PC-3 (cell line): ENCODE measurements at regions of chr2 and their contacts with region 1.

Region 1: DNA sequence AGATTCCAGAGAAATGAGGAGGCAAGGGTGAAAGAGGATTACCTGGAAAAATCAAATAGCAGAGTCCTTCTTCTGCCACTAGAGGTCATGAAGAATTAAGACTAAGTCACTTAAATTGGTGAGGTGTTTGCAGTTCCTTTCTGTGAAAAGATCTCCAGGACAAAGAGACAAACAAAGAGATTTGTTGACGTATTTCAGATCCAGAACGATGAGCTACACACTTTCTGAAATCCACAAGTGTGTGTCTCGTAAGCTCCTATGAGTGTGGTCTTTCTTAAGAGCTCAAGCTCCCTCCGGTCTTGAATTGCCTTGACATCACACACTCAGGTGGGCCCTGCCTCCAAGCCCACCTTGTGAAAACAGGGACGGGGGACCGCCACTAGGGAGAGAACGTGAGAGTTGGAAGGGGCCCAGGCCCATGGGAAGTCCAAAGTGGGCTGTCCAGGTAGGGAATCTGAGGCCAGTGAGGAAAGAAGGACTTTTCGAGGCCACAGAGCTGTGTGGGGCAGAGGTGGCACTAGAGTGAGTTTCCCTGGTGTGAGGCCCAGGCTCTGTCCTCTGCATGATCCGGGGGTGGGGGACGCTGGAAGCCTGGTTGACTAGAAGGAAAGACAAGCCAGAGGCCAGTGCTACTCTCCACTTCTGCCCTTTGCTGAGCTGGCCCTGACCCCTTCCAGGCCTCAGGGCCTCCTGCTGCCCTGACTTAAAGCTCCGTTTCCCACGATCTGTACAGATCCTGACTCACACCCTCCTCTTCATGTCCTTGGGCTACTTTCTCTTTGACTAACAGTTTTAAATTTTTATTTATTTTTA is 168.1 kb upstream of the NCK2 start:
- DNase-seq: peak; percentile 80
- ATAC-seq: peak; percentile 86
- H3K4me3 ChIP-seq: peak overlapping the region; percentile 36; the same call in 1 of the 2 replicates
- H3K27ac ChIP-seq: peak overlapping the region; percentile 93
- H3K4me1 ChIP-seq: peaks cover 30% of the 10 kb centered on the region
- H3K27me3 ChIP-seq: no peaks in the 10 kb centered on the region
- CTCF ChIP-seq: peak; percentile 80

Region 2: DNA sequence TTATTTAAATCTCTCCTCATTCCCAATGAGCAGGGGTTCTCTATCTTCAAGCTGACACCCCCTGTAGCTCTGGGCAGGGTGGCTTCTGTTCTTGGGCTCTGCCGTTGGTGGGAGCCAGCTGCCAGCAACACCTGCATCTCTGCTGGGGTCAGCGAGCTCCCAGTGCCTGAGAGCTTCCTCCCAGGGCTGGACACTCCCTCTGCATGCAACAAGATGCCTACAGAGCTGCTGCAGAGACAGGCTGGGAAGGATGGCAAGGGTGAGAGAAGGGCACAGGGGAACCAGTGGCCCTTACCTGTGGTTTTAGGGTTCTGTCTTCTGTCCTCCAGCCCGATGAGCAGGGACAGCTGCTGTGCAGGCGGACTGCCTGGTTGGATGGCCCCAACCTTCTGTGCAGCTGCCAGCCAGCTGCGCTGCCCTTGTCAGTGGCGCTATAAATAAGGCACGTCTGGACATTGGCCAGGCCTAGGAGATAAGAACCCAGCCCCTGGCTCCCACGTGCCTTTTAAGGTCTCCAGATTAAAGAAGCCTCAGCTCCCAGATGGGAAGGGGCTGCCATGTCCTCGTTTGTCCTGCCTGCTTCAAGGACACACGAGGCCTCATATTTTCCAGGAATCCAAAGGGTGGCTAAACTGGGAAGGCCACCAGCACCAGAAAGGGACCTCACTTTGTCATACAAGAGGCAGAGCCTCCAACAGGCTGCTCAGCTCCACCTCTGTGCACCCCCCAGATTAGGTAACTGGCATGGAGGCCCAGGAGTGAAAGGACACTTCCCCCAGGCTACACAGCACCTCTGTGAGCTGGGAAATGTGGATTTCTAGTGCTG is 138.3 kb before region 1 on chr2:
- CTCF ChIA-PET with region 1: no interaction called
- POLR2A ChIA-PET with region 1: no interaction called
- intact Hi-C with region 1: no loop called
- DNase-seq: no peak
- ATAC-seq: no peak
- H3K4me3 ChIP-seq: no peak overlapping the region
- H3K27ac ChIP-seq: no peak overlapping the region
- H3K4me1 ChIP-seq: no peaks in the 10 kb centered on the region
- H3K27me3 ChIP-seq: no peaks in the 10 kb centered on the region
- CTCF ChIP-seq: no peak

Region 3: DNA sequence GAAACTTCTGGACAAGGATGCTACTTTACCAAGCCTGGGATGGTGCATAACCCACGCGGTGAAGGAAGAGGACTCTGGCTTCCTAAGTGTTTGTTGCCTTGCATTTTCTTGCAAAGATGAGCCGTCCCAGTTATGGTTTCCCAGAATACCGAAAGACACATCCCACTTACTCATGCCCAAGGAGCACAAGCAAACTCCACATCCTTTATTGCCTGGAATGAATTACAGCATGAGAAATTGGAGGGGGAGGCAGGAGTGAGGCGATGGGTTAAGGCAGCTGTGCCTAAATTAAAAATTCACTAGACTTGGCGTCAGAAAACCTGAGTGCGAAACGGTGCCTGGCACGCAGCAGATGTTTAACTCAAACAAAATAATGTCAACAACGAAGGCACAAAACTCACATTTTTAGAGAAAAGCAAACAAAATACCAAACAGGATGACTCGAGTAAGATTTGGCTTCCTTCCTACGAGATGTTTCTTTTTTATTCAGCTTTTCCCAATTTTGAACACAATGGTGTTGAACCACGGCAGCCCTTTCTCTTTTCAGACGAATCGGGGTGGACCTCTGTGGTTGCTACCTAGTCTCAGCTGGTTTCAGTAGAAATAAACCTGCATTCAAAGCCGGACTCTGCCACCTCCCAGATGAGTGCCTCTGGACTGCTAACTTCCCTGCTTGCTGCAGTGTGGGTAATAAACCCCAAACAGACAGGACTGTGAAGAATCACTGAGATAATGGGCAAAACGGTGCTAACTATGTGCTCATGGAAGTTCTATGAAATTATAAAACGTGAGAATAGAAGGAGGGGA is 67.7 kb after region 1 on chr2:
- CTCF ChIA-PET with region 1: no interaction called
- POLR2A ChIA-PET with region 1: interaction called, 6 read pairs
- intact Hi-C with region 1: loop called (anchors 2 kb)
- DNase-seq: peak; percentile 55
- ATAC-seq: peak; percentile 78
- H3K4me3 ChIP-seq: peak overlapping the region; percentile 59
- H3K27ac ChIP-seq: peak overlapping the region; percentile 27
- H3K4me1 ChIP-seq: peaks cover 35% of the 10 kb centered on the region
- H3K27me3 ChIP-seq: no peaks in the 10 kb centered on the region
- CTCF ChIP-seq: no peak

Region 4: DNA sequence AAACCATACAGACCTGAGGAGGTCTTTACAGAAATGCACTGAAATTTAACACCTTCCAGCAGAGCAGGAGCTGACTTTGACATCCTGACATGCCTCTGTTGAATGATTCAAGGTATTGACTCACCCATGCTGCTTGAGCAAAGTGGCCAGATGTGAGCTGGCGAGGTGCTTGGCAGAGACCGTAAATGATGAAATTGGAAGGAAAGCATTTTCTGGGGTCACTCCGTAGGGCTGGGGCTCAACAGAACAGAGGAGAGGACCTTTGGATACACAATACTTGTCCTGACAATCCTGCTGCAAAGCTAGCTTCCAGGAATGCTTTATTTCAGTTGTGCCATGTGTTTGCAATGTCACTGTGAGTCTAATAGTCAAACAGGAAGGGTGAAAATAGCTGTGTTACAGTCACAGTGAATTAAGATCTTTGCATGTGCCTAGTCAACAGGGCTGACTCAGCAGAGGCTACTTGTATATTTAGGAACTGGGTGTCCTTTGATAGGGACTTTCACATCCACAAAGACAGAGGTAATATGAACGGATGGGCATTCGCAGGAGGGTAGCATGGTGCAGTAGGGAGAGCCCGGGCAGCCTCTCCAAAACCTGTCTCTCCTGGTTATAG is 136.4 kb after region 1 on chr2:
- CTCF ChIA-PET with region 1: interaction called, 6 read pairs
- POLR2A ChIA-PET with region 1: no interaction called
- intact Hi-C with region 1: loop called (anchors 10 kb)
- DNase-seq: peak; percentile 80
- ATAC-seq: peak; percentile 77
- H3K4me3 ChIP-seq: peak overlapping the region; percentile 42
- H3K27ac ChIP-seq: peak overlapping the region; percentile 77
- H3K4me1 ChIP-seq: peaks cover 40% of the 10 kb centered on the region
- H3K27me3 ChIP-seq: no peaks in the 10 kb centered on the region
- CTCF ChIP-seq: no peak

Region 5: DNA sequence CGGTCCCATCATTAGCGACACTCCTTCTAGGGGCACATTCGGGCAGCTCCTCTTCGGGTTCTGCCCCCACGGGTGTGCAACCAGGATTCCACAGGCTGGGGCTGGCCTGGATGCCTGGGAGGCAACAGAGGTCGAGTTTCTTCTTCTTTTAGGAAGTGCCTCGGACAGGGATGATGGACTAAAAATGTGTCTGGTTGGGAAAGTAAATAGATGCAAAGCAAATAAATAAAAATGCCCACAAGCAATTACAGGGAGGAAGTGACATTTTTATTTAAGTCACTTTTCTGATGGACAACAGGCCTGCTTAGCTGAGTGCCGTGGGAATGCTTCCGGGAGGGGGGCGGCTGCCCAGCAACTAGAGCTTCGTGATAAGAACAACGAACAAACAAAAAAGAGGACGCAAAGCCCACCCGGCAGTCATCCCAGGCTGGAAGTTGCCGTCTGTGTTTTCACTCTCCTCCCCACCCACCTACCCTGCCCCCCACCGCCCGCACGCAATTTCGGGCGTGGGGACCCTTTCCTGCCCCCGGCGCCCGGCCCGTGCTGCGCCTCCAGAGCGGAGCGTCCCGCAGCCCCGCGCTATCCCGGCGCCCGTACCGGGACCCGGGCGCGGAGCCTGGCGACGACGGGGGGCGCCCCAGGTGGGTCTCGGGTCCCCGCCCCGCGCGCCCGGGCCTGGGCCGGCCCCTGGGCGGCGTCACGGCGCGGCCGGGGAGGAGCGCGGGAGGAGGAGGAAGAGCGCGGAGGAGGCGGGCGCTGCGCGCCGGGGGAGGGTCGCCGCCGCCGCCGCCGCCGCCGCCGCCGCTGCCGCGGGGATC is 167.7 kb after region 1 on chr2:
- CTCF ChIA-PET with region 1: interaction called, 3 read pairs
- POLR2A ChIA-PET with region 1: no interaction called
- intact Hi-C with region 1: loop called (anchors 2 kb)
- DNase-seq: peak; percentile 64
- ATAC-seq: peak; percentile 80
- H3K4me3 ChIP-seq: peak overlapping the region; percentile 55
- H3K27ac ChIP-seq: peak overlapping the region; percentile 40
- H3K4me1 ChIP-seq: peaks cover 18% of the 10 kb centered on the region
- H3K27me3 ChIP-seq: no peaks in the 10 kb centered on the region
- CTCF ChIP-seq: no peak

Region 6: DNA sequence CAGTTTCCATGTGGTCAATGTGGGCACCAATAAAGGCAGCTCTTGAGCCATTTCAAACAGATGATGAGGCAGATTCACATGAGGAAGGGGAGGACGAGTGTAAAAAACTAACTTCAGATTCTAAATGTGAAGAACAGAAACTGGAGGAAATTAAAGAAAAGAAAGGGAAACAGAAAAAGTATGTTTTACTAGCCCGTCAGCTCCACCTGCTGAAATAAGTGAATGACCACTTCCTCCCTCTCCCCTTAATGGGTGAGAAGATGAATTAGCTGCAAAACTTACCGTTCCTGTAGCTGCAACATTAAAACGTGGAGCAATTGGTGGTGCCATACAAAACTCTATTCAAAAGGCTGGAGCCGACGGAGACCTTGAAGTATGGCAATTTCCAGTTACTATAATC is 414.0 kb after region 1 on chr2:
- CTCF ChIA-PET with region 1: no interaction called
- POLR2A ChIA-PET with region 1: no interaction called
- intact Hi-C with region 1: loop called (anchors 5 kb)
- DNase-seq: no peak
- ATAC-seq: no peak
- H3K4me3 ChIP-seq: no peak overlapping the region
- H3K27ac ChIP-seq: no peak overlapping the region
- H3K4me1 ChIP-seq: no peaks in the 10 kb centered on the region
- H3K27me3 ChIP-seq: no peaks in the 10 kb centered on the region
- CTCF ChIP-seq: no peak

Region 7: GRCh38 chr2:106085181-106085940 is 508.7 kb after region 1 on chr2:
- CTCF ChIA-PET with region 1: no interaction called
- POLR2A ChIA-PET with region 1: no interaction called
- intact Hi-C with region 1: loop called (anchors 5 kb)
- DNase-seq: peak; percentile 42
- ATAC-seq: peak; percentile 56
- H3K4me3 ChIP-seq: no peak overlapping the region
- H3K27ac ChIP-seq: no peak overlapping the region
- H3K4me1 ChIP-seq: no peaks in the 10 kb centered on the region
- H3K27me3 ChIP-seq: no peaks in the 10 kb centered on the region
- CTCF ChIP-seq: peak; percentile 59